Naive thymus-derived CD8-positive, alpha-beta T cell (primary cell): ENCODE measurements at regions of chr20 and their contacts with region 1.

Region 1: DNA sequence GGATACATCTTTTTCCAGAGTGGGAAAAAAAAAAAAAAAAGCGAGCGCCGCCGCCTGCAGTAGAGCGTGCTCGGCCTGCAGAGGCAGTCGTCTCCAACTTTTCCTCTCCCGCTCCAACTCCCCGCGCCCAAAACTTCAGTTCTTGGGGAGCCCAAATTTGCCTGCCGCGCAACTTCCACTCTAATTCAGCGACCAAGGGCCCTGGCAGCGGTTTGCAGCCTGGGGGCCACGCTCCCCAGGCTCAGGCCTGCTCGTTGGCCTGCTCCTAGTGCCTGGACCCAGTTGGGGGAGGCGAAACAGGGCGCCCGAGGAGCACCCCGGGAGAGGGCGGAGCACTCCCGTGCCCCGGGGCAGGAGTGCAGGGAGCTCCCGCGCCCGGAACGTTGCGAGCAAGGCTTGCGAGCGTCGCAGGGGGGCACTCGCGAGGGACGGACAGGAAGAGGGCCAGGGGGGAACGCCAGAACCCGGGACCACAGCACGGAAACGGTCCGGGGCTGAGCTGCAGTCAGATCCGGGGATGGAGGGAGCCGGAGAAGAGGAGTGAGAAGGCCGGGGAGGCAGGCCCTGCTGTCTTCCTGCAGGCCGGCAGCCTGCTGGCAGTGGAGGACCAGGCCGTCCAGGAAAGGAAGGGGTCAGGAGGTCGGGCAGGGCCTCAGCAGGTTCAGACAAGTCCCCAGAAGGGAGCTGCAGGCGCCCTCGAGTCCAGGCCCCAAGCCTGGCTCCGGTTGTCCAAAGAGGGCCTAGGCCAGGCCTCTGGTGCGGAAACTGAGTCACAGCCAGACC is at the start of gene STX16:
- DNase-seq: peak; percentile 73 to 90 (median 82)
- ATAC-seq: peak; percentile 62 to 66
- H3K4me3 Mint-ChIP-seq: peak within 1 kb of the TSS; percentile 92 to 100 (median 98)
- H3K27ac Mint-ChIP-seq: peak within 1 kb of the TSS; percentile 99 to 100 (median 100)
- H3K4me1 Mint-ChIP-seq: peaks cover 11 to 37% (median 28%) of the 10 kb centered on the region in 4 donors
- H3K27me3 Mint-ChIP-seq: no peaks in the 10 kb centered on the region
- polyA plus RNA-seq, gene STX16: 23.2 to 35.9 (median 30.4) TPM

Region 2: GRCh38 chr20:58388882-58389323 is 262.1 kb before region 1 on chr20 and contains the start of gene VAPB:
- POLR2A ChIA-PET with region 1: interaction called, 28 read pairs
- DNase-seq: peak; percentile 93 to 99 (median 98)
- ATAC-seq: peak; percentile 95 to 96
- H3K4me3 Mint-ChIP-seq: peak within 1 kb of the TSS; percentile 87 to 97 (median 93)
- H3K27ac Mint-ChIP-seq: peak within 1 kb of the TSS; percentile 90 to 99 (median 98)
- H3K4me1 Mint-ChIP-seq: peaks cover 30 to 47% (median 44%) of the 10 kb centered on the region in 4 donors
- H3K27me3 Mint-ChIP-seq: peaks cover 0 to 4% (median 0%) of the 10 kb centered on the region in 5 donors
- polyA plus RNA-seq, gene VAPB: 24.7 to 34.1 (median 28.4) TPM

Region 3: DNA sequence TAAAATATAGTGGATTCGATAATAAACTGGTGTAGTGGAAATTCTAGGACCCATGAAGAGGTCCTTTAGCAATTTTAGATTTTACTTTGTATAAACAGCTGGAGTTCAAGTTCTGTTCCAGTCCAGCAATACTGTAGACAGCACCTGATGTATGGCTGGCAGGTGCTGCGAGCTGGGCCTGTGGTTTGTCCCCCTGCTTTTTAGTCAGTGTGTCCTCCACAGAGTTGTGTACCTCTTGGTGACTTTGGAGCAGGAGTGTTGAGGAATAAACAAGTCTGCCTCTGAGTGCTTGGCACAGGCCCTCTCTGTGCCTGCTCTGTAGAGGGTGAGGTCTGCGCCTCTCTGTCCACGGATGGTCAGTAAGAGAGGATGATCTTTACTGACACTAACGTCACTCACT is 13.9 kb after region 1 on chr20:
- POLR2A ChIA-PET with region 1: interaction called, 112 read pairs
- DNase-seq: no peak
- ATAC-seq: no peak
- H3K4me3 Mint-ChIP-seq: no peak overlapping the region
- H3K27ac Mint-ChIP-seq: peak overlapping the region in 6 of 10 donors; percentile 5 to 86 (median 78)
- H3K4me1 Mint-ChIP-seq: peaks cover 31 to 71% (median 58%) of the 10 kb centered on the region in 4 donors
- H3K27me3 Mint-ChIP-seq: no peaks in the 10 kb centered on the region

Region 4: GRCh38 chr20:58850693-58851174 is 199.8 kb after region 1 on chr20 and contains the start of gene GNAS-AS1:
- POLR2A ChIA-PET with region 1: interaction called, 14 read pairs
- DNase-seq: peak; percentile 68 to 93 (median 80)
- ATAC-seq: peak; percentile 82 to 88
- H3K4me3 Mint-ChIP-seq: peak within 1 kb of the TSS; percentile 85 to 98 (median 94)
- H3K27ac Mint-ChIP-seq: peak within 1 kb of the TSS in 5 of 10 donors; percentile 42 to 85 (median 58)
- H3K4me1 Mint-ChIP-seq: peaks cover 22 to 58% (median 38%) of the 10 kb centered on the region in 4 donors
- H3K27me3 Mint-ChIP-seq: peaks cover 6 to 64% (median 41%) of the 10 kb centered on the region in 5 donors
- polyA plus RNA-seq, gene GNAS-AS1: 0.14 TPM in 1 of 3 donors, not detected in the others